Ovary (tissue), 10 donors: ENCODE measurements at regions of chr14 and their contacts with region 1.

Region 1: GRCh38 chr14:99518441-99519346 is 37.5 kb downstream of the CCNK start:
- DNase-seq: peak; percentile 59 to 88 (median 81)
- H3K4me3 ChIP-seq: no peak overlapping the region
- H3K27ac ChIP-seq: no peak overlapping the region
- H3K4me1 ChIP-seq: peaks cover 16% of the 10 kb centered on the region
- H3K27me3 ChIP-seq: no peaks in the 10 kb centered on the region
- CTCF ChIP-seq: peak; percentile 88 to 95 (median 91)
- EP300 ChIP-seq: no peak
- POLR2A ChIP-seq: no peak

Region 2: DNA sequence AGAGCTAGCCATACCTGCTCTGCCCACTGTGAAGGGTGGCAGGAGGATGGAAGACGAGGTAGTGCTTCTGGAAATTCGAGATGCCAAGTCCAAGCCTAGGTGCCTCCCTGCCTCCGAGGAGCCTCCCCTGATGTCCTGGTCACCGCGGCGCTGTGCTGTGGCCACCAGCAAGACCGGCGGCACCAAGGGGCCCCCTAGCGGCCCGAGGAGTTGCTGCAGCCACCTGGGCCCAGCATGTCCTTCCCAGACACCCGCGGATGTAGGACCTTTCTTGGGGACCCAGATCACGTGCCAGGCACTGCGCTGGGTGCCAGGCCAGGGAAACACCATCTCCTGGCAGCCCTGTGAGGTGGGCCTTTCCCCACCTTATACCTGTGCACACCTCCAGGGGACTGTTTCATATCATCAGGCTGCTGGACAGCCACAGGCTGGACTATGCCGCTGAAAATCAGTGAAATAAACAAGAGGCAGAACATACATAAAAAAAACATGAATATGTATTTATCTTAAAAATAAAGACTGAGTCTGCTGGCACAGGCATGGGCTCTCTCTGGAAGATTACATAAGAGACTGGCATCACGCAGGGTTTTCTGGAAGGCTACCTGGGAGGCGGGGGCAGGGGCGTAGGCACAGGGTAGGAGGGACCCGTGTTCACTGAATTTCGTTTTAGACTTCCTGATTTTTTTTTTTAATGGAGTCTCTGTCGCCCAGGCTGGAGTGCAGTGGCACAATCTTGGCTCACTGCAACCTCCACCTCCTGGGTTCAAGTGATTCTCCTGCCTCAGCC is 110.3 kb after region 1 on chr14:
- intact Hi-C with region 1: loop called (anchors 2 kb)
- DNase-seq: peak; percentile 68 to 84 (median 78)
- H3K4me3 ChIP-seq: no peak overlapping the region
- H3K27ac ChIP-seq: no peak overlapping the region
- H3K4me1 ChIP-seq: peaks cover 1% of the 10 kb centered on the region
- H3K27me3 ChIP-seq: no peaks in the 10 kb centered on the region
- CTCF ChIP-seq: peak; percentile 95
- EP300 ChIP-seq: no peak
- POLR2A ChIP-seq: no peak

Region 3: GRCh38 chr14:99821519-99822508 is 303.1 kb after region 1 on chr14:
- intact Hi-C with region 1: no loop called
- DNase-seq: no peak
- H3K4me3 ChIP-seq: no peak overlapping the region
- H3K27ac ChIP-seq: no peak overlapping the region
- H3K4me1 ChIP-seq: no peaks in the 10 kb centered on the region
- H3K27me3 ChIP-seq: no peaks in the 10 kb centered on the region
- CTCF ChIP-seq: no peak
- EP300 ChIP-seq: no peak
- POLR2A ChIP-seq: no peak